ENCODE measurements at regions of chr22 and their contacts with region 1.

Region 1: DNA sequence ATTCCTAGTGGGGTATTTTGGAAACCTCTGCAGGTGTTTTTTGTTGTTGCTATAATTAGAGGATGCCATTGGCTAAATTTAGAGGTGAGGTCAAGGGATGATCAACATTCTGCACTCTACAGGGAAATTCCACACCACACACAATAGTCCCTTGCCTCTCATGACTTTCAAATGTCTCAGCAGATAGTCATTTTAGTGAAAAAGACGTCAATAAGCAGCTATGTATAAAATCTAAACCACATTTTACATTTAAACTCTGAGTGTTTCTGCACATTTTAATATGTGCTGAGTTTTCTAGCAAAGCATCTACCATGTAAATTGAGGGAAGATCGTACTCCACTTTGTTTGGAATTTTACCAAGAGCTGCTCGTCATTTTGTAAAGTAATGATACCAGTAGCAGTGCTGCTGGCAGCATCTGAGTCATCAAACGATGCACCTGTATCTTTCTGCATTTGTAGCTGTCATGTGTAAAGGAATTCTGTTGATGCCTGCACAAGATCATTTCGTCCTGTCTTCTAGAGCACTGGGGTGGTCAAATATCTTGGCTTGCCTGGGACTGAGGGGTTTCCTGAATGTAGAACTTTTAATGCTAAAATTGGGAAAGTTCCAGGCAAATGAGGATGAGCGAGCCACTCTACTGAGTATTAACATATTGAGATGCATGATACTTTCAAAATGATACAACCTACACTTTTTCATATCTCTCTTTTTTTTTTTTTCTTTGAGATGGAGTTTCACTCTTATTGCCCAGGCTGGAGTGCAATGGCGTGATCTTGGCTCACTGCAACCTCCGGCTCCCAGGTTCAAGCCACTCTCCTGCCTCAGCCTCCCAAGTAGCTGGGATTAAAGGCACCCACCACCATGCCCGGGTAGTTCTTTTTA is 414.5 kb upstream of the SYN3 start:
- DNase-seq: peak; percentile 78
- ATAC-seq: peak; percentile 79
- H3K4me3 ChIP-seq: peak overlapping the region; percentile 26; the same call in 1 of the 2 replicates
- H3K27ac ChIP-seq: peak overlapping the region; percentile 99
- H3K4me1 ChIP-seq: peaks cover 42% of the 10 kb centered on the region
- H3K27me3 ChIP-seq: no peaks in the 10 kb centered on the region
- CTCF ChIP-seq: no peak
- EP300 ChIP-seq: peak; percentile 99 to 100
- POLR2A ChIP-seq: no peak
- RAD21 ChIP-seq: no peak

Region 2: GRCh38 chr22:33221568-33221967 is 251.1 kb before region 1 on chr22:
- CTCF ChIA-PET with region 1: no interaction called
- POLR2A ChIA-PET with region 1: no interaction called
- RAD21 ChIA-PET with region 1: no interaction called
- SMC1A ChIA-PET with region 1: no interaction called
- in situ Hi-C with region 1: no loop called
- intact Hi-C with region 1: no loop called
- DNase-seq: no peak
- ATAC-seq: no peak
- H3K4me3 ChIP-seq: no peak overlapping the region
- H3K27ac ChIP-seq: no peak overlapping the region
- H3K4me1 ChIP-seq: no peaks in the 10 kb centered on the region
- H3K27me3 ChIP-seq: no peaks in the 10 kb centered on the region
- CTCF ChIP-seq: no peak
- EP300 ChIP-seq: no peak
- POLR2A ChIP-seq: no peak
- RAD21 ChIP-seq: no peak

Region 3: GRCh38 chr22:33325235-33326004 is 147.3 kb before region 1 on chr22:
- CTCF ChIA-PET with region 1: interaction called, 5 read pairs
- POLR2A ChIA-PET with region 1: interaction called, 4 read pairs
- RAD21 ChIA-PET with region 1: interaction called, 3 read pairs
- SMC1A ChIA-PET with region 1: interaction called, 7 read pairs
- in situ Hi-C with region 1: no loop called
- intact Hi-C with region 1: loop called (anchors 2 kb)
- DNase-seq: peak; percentile 87
- ATAC-seq: peak; percentile 92
- H3K4me3 ChIP-seq: peak overlapping the region; percentile 23; the same call in 1 of the 2 replicates
- H3K27ac ChIP-seq: peak overlapping the region; percentile 63
- H3K4me1 ChIP-seq: peaks cover 37% of the 10 kb centered on the region
- H3K27me3 ChIP-seq: no peaks in the 10 kb centered on the region
- CTCF ChIP-seq: no peak
- EP300 ChIP-seq: 0 out of 4 replicates have a peak, but pooled peaks of 1 of the 2 experiments have one; percentile 31
- POLR2A ChIP-seq: peak; percentile 61
- RAD21 ChIP-seq: peak; percentile 19; the same call in 1 of the 2 replicates

Region 4: DNA sequence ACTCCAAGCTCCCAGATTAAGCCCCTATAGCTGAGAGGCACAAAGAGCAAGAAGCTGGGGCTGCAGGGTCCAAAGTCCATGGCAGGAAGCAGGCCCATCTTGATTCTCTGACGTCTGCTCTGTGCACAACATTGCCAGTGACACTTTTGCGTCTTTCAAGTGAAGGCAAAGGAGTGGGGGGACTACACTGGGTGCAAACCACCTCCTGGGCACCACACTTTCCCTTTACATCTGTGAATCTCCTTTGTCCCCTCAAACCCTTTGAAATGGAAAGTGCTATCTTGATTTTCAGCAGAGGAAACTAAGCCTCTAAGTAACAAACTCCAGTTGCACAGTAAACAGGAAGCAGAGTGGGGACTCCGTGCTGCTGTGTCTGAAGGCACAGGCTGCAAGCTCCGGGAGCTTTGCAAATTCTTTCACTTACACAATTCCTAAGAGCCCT is 19.5 kb after region 1 on chr22:
- CTCF ChIA-PET with region 1: interaction called, 8 read pairs
- POLR2A ChIA-PET with region 1: interaction called, 7 read pairs
- RAD21 ChIA-PET with region 1: interaction called, 7 read pairs
- SMC1A ChIA-PET with region 1: interaction called, 21 read pairs
- in situ Hi-C with region 1: no loop called
- intact Hi-C with region 1: no loop called
- DNase-seq: no peak
- ATAC-seq: peak; percentile 77
- H3K4me3 ChIP-seq: no peak overlapping the region; the same call in 1 of the 2 replicates
- H3K27ac ChIP-seq: no peak overlapping the region
- H3K4me1 ChIP-seq: peaks cover 12% of the 10 kb centered on the region
- H3K27me3 ChIP-seq: no peaks in the 10 kb centered on the region
- CTCF ChIP-seq: no peak
- EP300 ChIP-seq: no peak
- POLR2A ChIP-seq: no peak
- RAD21 ChIP-seq: no peak

Region 5: DNA sequence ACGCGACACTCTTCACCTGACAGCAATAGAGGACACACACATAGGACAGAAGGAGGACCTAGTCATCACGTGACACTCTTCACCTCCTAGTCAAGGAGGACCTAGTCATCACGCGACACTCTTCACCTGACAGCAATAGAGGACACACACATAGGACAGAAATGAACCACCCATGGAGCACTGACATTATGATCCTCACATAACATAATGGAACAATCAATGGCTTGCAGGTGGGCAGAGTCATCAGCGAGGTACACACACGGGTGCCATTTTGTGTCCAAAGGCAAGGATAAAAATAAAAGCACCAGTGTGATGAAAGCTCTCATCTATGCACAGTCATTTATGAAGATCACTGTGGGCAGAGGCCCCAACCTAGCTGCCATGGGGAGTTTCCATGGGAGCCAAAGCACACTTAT is 92.9 kb after region 1 on chr22:
- CTCF ChIA-PET with region 1: interaction called, 3 read pairs
- POLR2A ChIA-PET with region 1: interaction called, 7 read pairs
- RAD21 ChIA-PET with region 1: no interaction called
- SMC1A ChIA-PET with region 1: interaction called, 5 read pairs
- in situ Hi-C with region 1: loop called (anchors 5 kb)
- intact Hi-C with region 1: loop called (anchors 2 kb)
- DNase-seq: no peak
- ATAC-seq: peak; percentile 30
- H3K4me3 ChIP-seq: no peak overlapping the region
- H3K27ac ChIP-seq: peak overlapping the region; percentile 64
- H3K4me1 ChIP-seq: peaks cover 46% of the 10 kb centered on the region
- H3K27me3 ChIP-seq: no peaks in the 10 kb centered on the region
- CTCF ChIP-seq: no peak
- EP300 ChIP-seq: no peak
- POLR2A ChIP-seq: no peak
- RAD21 ChIP-seq: no peak

Region 6: GRCh38 chr22:33579448-33580093 is 106.9 kb after region 1 on chr22:
- CTCF ChIA-PET with region 1: interaction called, 6 read pairs
- POLR2A ChIA-PET with region 1: no interaction called
- RAD21 ChIA-PET with region 1: no interaction called
- SMC1A ChIA-PET with region 1: interaction called, 11 read pairs
- in situ Hi-C with region 1: no loop called
- intact Hi-C with region 1: no loop called
- DNase-seq: no peak
- ATAC-seq: peak; percentile 97
- H3K4me3 ChIP-seq: no peak overlapping the region
- H3K27ac ChIP-seq: no peak overlapping the region
- H3K4me1 ChIP-seq: peaks cover 3% of the 10 kb centered on the region; the same call in 1 of the 2 replicates
- H3K27me3 ChIP-seq: no peaks in the 10 kb centered on the region
- CTCF ChIP-seq: peak; percentile 86 to 98 (median 95)
- EP300 ChIP-seq: no peak
- POLR2A ChIP-seq: no peak
- RAD21 ChIP-seq: peak; percentile 95

Region 7: DNA sequence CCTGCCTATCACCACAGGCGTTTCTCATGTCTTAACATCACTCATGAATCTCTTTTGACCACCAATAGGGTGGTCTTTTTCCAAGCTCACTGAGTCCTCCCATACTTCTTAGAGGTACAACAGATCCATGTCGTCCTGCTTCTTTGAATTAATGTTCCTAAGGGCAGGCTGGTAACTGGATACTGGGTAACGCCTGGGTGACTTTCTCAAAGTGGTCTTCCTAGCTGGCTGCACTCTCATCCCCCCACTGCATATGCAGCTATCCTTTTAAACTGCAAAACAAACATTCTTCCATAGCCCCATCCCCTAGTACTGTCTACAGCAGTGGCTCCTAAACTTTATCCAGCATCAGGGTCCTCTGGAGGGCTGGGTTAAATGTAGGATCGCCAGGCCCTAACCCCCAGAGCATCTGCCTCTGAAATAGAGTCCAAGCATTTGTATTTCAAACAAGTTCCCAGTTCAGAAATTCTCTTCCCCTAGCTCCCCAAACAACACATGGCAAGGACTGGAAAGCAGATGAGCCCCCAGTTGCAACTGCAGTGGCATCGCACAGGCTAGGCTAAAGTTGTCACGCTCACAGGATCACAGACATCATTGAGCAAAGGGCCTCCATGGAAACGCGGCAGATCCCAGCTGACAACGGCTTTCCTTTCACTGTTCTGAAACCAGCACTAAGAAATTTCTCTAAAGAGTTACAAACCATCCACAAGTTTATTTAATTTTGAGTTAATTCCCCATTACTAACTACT is 242.7 kb after region 1 on chr22:
- CTCF ChIA-PET with region 1: no interaction called
- POLR2A ChIA-PET with region 1: no interaction called
- RAD21 ChIA-PET with region 1: no interaction called
- SMC1A ChIA-PET with region 1: no interaction called
- in situ Hi-C with region 1: no loop called
- intact Hi-C with region 1: no loop called
- DNase-seq: no peak
- ATAC-seq: no peak
- H3K4me3 ChIP-seq: no peak overlapping the region
- H3K27ac ChIP-seq: no peak overlapping the region
- H3K4me1 ChIP-seq: no peaks in the 10 kb centered on the region
- H3K27me3 ChIP-seq: no peaks in the 10 kb centered on the region
- CTCF ChIP-seq: no peak
- EP300 ChIP-seq: no peak
- POLR2A ChIP-seq: no peak
- RAD21 ChIP-seq: no peak

Region 8: GRCh38 chr22:33932997-33933396 is 460.3 kb after region 1 on chr22:
- CTCF ChIA-PET with region 1: no interaction called
- POLR2A ChIA-PET with region 1: no interaction called
- RAD21 ChIA-PET with region 1: no interaction called
- SMC1A ChIA-PET with region 1: no interaction called
- in situ Hi-C with region 1: no loop called
- intact Hi-C with region 1: no loop called
- DNase-seq: no peak
- ATAC-seq: no peak
- H3K4me3 ChIP-seq: no peak overlapping the region
- H3K27ac ChIP-seq: no peak overlapping the region
- H3K4me1 ChIP-seq: no peaks in the 10 kb centered on the region
- H3K27me3 ChIP-seq: no peaks in the 10 kb centered on the region
- CTCF ChIP-seq: no peak
- EP300 ChIP-seq: no peak
- POLR2A ChIP-seq: no peak
- RAD21 ChIP-seq: no peak

Region 9: DNA sequence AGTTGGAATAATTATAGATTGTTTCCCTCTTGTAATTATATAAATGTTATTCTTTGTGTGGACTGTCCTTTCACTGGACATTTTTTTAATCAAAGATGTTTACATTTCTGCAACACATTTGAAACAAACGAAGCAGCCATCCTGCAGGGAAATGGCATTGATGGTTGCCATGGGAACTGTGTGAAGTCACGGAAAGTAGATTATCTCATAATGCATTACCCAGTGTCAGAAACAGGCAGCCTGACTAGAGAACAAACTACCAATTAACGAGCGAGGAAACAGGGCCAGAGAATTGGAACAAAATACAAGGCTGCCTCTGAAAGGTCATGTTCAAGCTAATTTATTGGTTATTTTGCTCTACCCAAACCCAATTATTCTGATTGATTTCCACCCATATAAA is 544.5 kb after region 1 on chr22:
- CTCF ChIA-PET with region 1: no interaction called
- POLR2A ChIA-PET with region 1: no interaction called
- RAD21 ChIA-PET with region 1: no interaction called
- SMC1A ChIA-PET with region 1: no interaction called
- in situ Hi-C with region 1: no loop called
- intact Hi-C with region 1: no loop called
- DNase-seq: no peak
- ATAC-seq: no peak
- H3K4me3 ChIP-seq: no peak overlapping the region
- H3K27ac ChIP-seq: no peak overlapping the region
- H3K4me1 ChIP-seq: no peaks in the 10 kb centered on the region
- H3K27me3 ChIP-seq: no peaks in the 10 kb centered on the region
- CTCF ChIP-seq: no peak
- EP300 ChIP-seq: no peak
- POLR2A ChIP-seq: no peak
- RAD21 ChIP-seq: no peak

Region 10: DNA sequence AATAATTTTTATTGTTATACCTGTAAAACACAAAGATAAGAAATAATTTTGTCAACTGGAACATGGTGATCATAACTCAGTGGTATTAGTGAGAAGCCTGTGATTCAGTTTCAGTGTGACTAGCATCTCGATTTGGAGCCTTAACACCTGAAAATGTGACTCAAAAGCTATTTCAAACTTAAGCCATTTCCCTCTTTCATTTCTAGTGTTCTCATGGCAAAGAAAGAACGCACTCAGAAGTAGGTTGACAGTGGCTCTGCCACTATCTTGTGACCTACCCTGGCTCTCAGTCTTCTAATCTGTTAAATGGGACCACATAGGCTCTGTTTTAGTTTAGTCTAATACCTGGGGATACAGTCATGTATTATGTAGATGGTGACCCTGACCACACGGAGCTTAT is 1655.9 kb after region 1 on chr22:
- CTCF ChIA-PET with region 1: no interaction called
- POLR2A ChIA-PET with region 1: no interaction called
- RAD21 ChIA-PET with region 1: no interaction called
- SMC1A ChIA-PET with region 1: no interaction called
- in situ Hi-C with region 1: loop called (anchors 10 kb)
- intact Hi-C with region 1: loop called (anchors 5 kb)
- DNase-seq: peak; percentile 95
- ATAC-seq: peak; percentile 78
- H3K4me3 ChIP-seq: no peak overlapping the region
- H3K27ac ChIP-seq: peak overlapping the region; percentile 99
- H3K4me1 ChIP-seq: peaks cover 80% of the 10 kb centered on the region
- H3K27me3 ChIP-seq: no peaks in the 10 kb centered on the region
- CTCF ChIP-seq: no peak
- EP300 ChIP-seq: peak; percentile 81 to 95
- POLR2A ChIP-seq: no peak
- RAD21 ChIP-seq: peak; percentile 13; the same call in 1 of the 2 replicates